Breast epithelium (tissue), 4 donors: ENCODE measurements at regions of chr6 and their contacts with region 1.

Region 1: DNA sequence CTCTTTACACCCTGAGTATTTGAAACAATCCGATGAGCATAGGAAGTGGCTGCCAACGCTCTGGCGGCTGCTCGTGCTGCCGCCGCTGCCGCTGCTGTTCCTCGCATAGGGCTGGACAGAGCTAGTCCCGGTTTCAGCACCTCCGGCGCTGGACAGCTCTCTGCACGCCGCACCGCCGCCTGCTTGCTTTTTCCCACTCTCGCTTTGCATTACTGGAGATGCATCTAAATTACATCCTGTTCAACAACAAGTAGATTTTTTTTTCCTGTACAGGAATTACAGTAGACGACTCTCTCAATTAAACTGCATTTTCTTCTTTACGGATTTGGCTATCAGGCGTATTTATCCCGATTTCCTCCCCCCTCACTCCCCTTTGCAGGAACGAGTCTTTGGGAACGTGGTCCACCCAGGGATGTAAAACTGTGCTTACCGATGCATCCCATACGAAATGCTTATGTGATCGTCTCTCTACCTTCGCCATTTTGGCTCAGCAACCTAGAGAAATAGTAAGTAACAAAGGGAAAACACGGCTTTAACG is 563.8 kb downstream of the LMBRD1 start:
- DNase-seq: peak in 1 of 2 donors; percentile 71
- H3K4me3 ChIP-seq: no peak overlapping the region
- H3K27ac ChIP-seq: no peak overlapping the region
- H3K4me1 ChIP-seq: no peaks in the 10 kb centered on the region
- H3K27me3 ChIP-seq: no peaks in the 10 kb centered on the region
- CTCF ChIP-seq: no peak
- POLR2A ChIP-seq: no peak

Region 2: GRCh38 chr6:67694120-67694519 is 1538.9 kb before region 1 on chr6:
- intact Hi-C with region 1: loop called (anchors 10 kb)
- DNase-seq: no peak
- H3K4me3 ChIP-seq: no peak overlapping the region
- H3K27ac ChIP-seq: no peak overlapping the region
- H3K4me1 ChIP-seq: no peaks in the 10 kb centered on the region
- H3K27me3 ChIP-seq: no peaks in the 10 kb centered on the region
- CTCF ChIP-seq: no peak
- POLR2A ChIP-seq: no peak

Region 3: GRCh38 chr6:69202768-69203167 is 30.2 kb before region 1 on chr6:
- intact Hi-C with region 1: no loop called
- DNase-seq: no peak
- H3K4me3 ChIP-seq: no peak overlapping the region
- H3K27ac ChIP-seq: no peak overlapping the region
- H3K4me1 ChIP-seq: no peaks in the 10 kb centered on the region
- H3K27me3 ChIP-seq: no peaks in the 10 kb centered on the region
- CTCF ChIP-seq: no peak
- POLR2A ChIP-seq: no peak